ENCODE measurements at regions of chr5 and their contacts with region 1.

Region 1: GRCh38 chr5:143824851-143825720 is 13.1 kb downstream of the HMHB1 start:
- DNase-seq: peak; percentile 79 to 96
- H3K4me3 ChIP-seq: no peak overlapping the region
- CTCF ChIP-seq: peak in 1 of 3 donors; percentile 84
- POLR2A ChIP-seq: no peak

Region 2: GRCh38 chr5:142548739-142549275 is 1276.3 kb before region 1 on chr5:
- intact Hi-C with region 1: no loop called
- DNase-seq: peak in 1 of 2 donors; percentile 48
- H3K4me3 ChIP-seq: no peak overlapping the region
- CTCF ChIP-seq: no peak
- POLR2A ChIP-seq: no peak

Region 3: GRCh38 chr5:142922223-142922952 is 902.7 kb before region 1 on chr5:
- intact Hi-C with region 1: loop called (anchors 10 kb)
- DNase-seq: no peak
- H3K4me3 ChIP-seq: no peak overlapping the region
- CTCF ChIP-seq: no peak
- POLR2A ChIP-seq: no peak

Region 4: GRCh38 chr5:143002459-143003328 is 822.4 kb before region 1 on chr5:
- intact Hi-C with region 1: loop called (anchors 5 kb)
- DNase-seq: no peak
- H3K4me3 ChIP-seq: no peak overlapping the region
- CTCF ChIP-seq: no peak
- POLR2A ChIP-seq: no peak

Region 5: GRCh38 chr5:143413958-143414669 is 411.0 kb before region 1 on chr5:
- intact Hi-C with region 1: loop called (anchors 10 kb)
- DNase-seq: no peak
- H3K4me3 ChIP-seq: no peak overlapping the region
- CTCF ChIP-seq: no peak
- POLR2A ChIP-seq: no peak

Region 6: DNA sequence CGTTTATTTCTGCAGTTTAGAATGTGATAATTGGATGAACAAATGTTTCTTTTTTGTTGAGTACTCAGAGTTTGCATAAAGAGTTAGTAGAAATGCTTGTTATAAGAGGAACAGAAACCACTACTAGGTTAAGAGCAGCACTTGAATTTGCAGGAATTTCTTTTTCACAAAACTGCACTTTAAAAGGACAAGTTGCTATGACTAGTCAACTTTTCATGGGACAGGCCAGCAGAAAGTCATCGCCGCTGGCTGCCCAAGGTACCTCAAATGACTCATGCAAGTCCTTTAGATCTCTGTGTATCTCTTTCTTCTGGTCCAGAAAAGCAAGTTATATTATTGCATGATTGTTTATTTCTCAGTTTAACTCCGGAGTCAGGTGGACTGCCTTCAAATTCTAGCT is 110.5 kb before region 1 on chr5:
- intact Hi-C with region 1: no loop called
- DNase-seq: no peak
- H3K4me3 ChIP-seq: no peak overlapping the region
- CTCF ChIP-seq: no peak
- POLR2A ChIP-seq: no peak

Region 7: DNA sequence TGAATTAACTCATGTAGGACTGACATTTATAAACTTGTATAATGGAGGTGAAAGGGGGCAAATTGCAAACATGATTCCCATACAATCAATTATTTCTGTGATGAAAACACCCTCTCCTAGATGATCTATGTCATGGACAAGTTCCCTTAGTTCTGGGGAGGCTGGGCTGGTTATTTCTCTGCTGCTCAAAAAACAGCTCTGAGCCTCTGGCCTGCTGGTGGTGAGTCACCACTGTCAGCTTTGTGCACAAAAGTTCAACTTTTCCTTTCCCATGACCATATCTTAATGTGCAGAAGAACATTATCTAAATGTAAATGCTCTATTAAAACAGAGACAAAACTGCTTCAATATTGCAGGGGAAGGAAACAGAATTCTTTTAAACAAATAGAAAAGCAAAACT is 71.9 kb after region 1 on chr5:
- intact Hi-C with region 1: no loop called
- DNase-seq: no peak
- H3K4me3 ChIP-seq: no peak overlapping the region
- CTCF ChIP-seq: no peak
- POLR2A ChIP-seq: no peak

Measured in lower leg skin (tissue), 4 donors.